WTC11 (cell line): ENCODE measurements at regions of chr2 and their contacts with region 1.

Region 1: DNA sequence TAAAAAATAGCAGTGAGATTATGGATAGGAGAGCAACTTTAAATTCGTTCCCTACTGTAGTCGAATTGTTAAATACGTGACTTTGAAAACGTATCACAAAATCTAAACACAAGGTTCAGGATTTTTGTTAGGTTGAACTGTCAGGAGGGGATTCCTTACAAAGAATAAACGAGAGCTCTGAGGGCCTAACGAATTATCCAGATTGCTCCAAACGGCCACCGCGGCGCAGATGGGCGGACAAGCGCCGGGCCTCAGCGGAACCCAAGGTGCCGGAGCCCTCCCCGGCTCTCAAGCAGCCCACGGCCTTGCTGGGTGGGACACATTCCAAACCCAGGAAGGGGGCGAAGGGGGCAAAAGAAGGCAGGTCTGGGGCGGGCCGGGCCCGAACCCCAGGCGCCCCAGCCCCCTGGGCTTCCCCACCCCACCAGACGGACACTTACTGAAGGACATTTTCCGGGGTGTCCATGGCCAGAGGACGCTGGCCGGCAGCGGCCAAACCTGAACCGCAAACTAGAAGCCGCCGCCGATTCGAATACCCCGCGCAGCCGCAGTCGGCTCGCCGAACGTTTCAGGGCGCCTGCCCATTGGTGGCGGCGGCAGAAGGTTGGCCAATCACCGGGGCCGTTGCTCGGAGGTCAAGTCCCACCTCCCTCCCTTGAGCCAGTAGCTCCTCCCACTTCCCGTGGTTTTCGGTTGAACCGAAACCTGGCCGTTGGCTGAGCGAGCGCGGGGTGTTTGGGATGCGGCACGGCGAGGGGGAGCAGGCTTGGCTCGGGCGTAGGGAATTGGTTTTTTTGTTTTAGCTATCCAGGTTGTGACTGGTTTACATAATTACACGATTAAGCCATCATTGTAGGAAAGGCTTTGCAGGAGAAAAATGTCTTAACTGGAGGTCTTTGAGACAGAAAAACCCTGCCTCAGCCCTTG is at the start of gene BUB1:
- DNase-seq: peak; percentile 98
- ATAC-seq: peak; percentile 94
- H3K4me3 Mint-ChIP-seq: peak within 1 kb of the TSS; percentile 89
- H3K27ac Mint-ChIP-seq: peak within 1 kb of the TSS; percentile 99
- H3K4me1 Mint-ChIP-seq: peaks cover 45% of the 10 kb centered on the region
- H3K27me3 Mint-ChIP-seq: peaks cover 41% of the 10 kb centered on the region
- CTCF ChIP-seq: no peak
- total RNA-seq, gene BUB1: 115 to 118 TPM (median 116 TPM) in 3 replicates

Region 2: GRCh38 chr2:110688594-110689091 is 10.8 kb after region 1 on chr2:
- CTCF ChIA-PET with region 1: interaction called, 5 read pairs
- POLR2A ChIA-PET with region 1: interaction called, 18 read pairs
- DNase-seq: peak; percentile 48
- ATAC-seq: peak; percentile 83
- H3K4me3 Mint-ChIP-seq: peak overlapping the region; percentile 69
- H3K27ac Mint-ChIP-seq: peak overlapping the region; percentile 99
- H3K4me1 Mint-ChIP-seq: peaks cover 74% of the 10 kb centered on the region
- H3K27me3 Mint-ChIP-seq: peaks cover 83% of the 10 kb centered on the region
- CTCF ChIP-seq: no peak

Region 3: DNA sequence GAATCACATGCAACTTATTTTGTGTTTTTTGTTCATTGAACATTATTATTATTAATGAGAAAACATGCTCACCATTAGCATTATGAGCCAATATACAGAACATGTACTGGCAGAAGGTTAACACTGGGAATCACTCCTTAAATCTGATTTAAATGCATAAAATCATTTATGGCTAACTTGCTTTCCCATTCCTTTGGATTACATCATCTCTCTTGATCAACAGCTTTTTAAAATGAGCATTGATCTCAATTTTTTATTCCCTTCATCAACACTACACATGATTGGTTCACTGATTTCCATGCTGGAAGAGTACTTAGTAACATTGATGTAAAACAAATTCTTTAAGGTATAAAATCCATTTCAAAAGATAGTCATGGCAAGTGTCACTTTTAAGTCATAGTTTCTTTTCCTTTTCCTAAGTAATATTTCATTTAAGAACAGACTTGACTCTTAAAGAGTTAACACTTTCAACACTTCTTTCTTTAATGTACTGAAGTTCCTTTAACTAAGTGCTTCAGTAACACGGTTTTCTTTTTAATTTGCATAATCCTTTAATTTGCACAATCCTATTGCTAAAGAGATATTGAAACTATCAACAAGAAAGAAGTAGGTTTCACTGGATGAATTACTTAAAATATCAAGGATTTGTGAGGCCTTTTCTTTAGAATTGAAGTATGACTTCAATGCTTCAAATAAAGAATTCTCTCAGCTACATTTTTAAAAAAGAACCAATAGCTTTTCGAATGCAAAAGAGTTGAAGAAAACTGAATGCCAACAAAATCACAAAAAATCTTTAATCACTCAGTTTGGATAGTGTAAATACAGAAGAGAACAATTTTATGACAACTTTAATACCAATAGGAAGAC is 25.0 kb after region 1 on chr2:
- CTCF ChIA-PET with region 1: no interaction called
- POLR2A ChIA-PET with region 1: no interaction called
- DNase-seq: no peak
- ATAC-seq: no peak
- H3K4me3 Mint-ChIP-seq: no peak overlapping the region
- H3K27ac Mint-ChIP-seq: no peak overlapping the region
- H3K4me1 Mint-ChIP-seq: peaks cover 30% of the 10 kb centered on the region
- H3K27me3 Mint-ChIP-seq: peaks cover 10% of the 10 kb centered on the region
- CTCF ChIP-seq: no peak

Region 4: DNA sequence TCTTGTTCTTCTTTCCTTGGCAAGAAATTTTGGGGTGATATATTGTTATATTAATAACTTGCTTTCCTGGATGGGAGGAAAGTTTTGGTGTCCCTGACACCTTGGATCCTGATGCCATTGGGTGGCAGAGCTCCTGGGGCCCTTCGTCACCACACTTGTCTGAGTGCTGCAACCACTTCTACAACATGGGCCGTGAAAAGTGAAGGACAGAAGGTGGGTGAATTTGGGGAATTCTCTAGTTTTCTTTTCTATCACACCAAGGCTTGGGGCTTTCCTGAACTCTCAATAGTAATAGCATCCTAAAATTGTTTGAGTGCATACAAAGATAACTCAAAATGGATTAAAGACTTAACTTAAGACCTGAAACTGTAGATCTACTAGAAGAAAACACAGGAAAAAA is 64.6 kb after region 1 on chr2:
- CTCF ChIA-PET with region 1: no interaction called
- POLR2A ChIA-PET with region 1: no interaction called
- DNase-seq: no peak
- ATAC-seq: no peak
- H3K4me3 Mint-ChIP-seq: no peak overlapping the region
- H3K27ac Mint-ChIP-seq: no peak overlapping the region
- H3K4me1 Mint-ChIP-seq: peaks cover 72% of the 10 kb centered on the region
- H3K27me3 Mint-ChIP-seq: no peaks in the 10 kb centered on the region
- CTCF ChIP-seq: no peak